Activated T-helper 1 cell treated with anti-CD3 and anti-CD28 coated beads, Interleukin-12 subunit alpha, Interleukin-12 subunit beta, Interleukin-2, Interleukin-4 antibody, amounts not matched to agents 30 ng/mL and 10 ng/mL and 1 ng/mL, durations not matched to agents 14 hours and 24 hours and 36 hours (primary cell): ENCODE measurements at regions of chr2 and their contacts with region 1.

Region 1: GRCh38 chr2:173286153-173286809 is 68.4 kb upstream of the CDCA7 start:
- DNase-seq: no peak
- H3K4me3 Mint-ChIP-seq: no peak overlapping the region
- H3K27ac Mint-ChIP-seq: peak overlapping the region; percentile 40
- H3K4me1 Mint-ChIP-seq: peaks cover 5% of the 10 kb centered on the region
- H3K27me3 Mint-ChIP-seq: no peaks in the 10 kb centered on the region

Region 2: GRCh38 chr2:173239644-173240043 is 46.6 kb before region 1 on chr2:
- intact Hi-C with region 1: loop called (anchors 1 kb)
- DNase-seq: peak; percentile 6
- H3K4me3 Mint-ChIP-seq: no peak overlapping the region
- H3K27ac Mint-ChIP-seq: no peak overlapping the region
- H3K4me1 Mint-ChIP-seq: peaks cover 11% of the 10 kb centered on the region
- H3K27me3 Mint-ChIP-seq: no peaks in the 10 kb centered on the region

Region 3: GRCh38 chr2:173370198-173370597 is 83.9 kb after region 1 on chr2:
- intact Hi-C with region 1: loop called (anchors 5 kb)
- DNase-seq: peak; percentile 2
- H3K4me3 Mint-ChIP-seq: peak overlapping the region; percentile 6
- H3K27ac Mint-ChIP-seq: peak overlapping the region; percentile 88
- H3K4me1 Mint-ChIP-seq: peaks cover 26% of the 10 kb centered on the region
- H3K27me3 Mint-ChIP-seq: no peaks in the 10 kb centered on the region